ENCODE measurements at regions of chr2 and their contacts with region 1.

Region 1: GRCh38 chr2:207746131-207746530 is 23.6 kb downstream of the FZD5 start:
- DNase-seq: peak; percentile 85
- ATAC-seq: peak; percentile 79
- H3K4me3 ChIP-seq: no peak overlapping the region
- H3K27ac ChIP-seq: peak overlapping the region; percentile 2
- H3K4me1 ChIP-seq: peaks cover 64% of the 10 kb centered on the region
- H3K27me3 ChIP-seq: no peaks in the 10 kb centered on the region
- CTCF ChIP-seq: peak; percentile 97
- EP300 ChIP-seq: peak in 1 of 2 experiments; percentile 36; a peak in 1 of 4 replicates
- POLR2A ChIP-seq: no peak
- RAD21 ChIP-seq: peak; percentile 99

Region 2: DNA sequence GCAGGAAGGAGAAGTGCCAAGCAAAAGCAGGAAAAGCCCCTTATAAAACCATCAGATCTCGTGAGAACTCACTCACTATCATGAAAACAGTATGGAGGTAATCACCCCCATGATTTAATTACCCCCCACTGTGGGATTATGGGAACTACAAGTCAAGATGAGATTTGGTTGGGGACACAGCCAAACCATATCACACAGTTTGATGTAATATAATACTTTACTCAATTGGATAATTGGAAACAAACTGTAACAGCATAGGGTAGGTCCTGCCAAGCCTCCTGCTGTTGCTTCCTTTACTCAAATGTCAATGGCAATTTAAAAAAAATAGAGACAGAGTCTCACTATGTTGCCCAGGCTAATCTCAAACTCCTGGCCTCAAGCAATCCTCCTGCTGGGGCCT is 105.5 kb before region 1 on chr2:
- CTCF ChIA-PET with region 1: no interaction called
- POLR2A ChIA-PET with region 1: no interaction called
- in situ Hi-C with region 1: no loop called
- intact Hi-C with region 1: no loop called
- DNase-seq: no peak
- ATAC-seq: no peak
- H3K4me3 ChIP-seq: no peak overlapping the region
- H3K27ac ChIP-seq: no peak overlapping the region
- H3K4me1 ChIP-seq: no peaks in the 10 kb centered on the region
- H3K27me3 ChIP-seq: peaks cover 0 to 3% of the 10 kb centered on the region in 2 experiments; a peak in 1 of 5 replicates
- CTCF ChIP-seq: no peak
- EP300 ChIP-seq: no peak
- POLR2A ChIP-seq: no peak
- RAD21 ChIP-seq: no peak

Region 3: GRCh38 chr2:207722773-207723424 is 23.2 kb before region 1 on chr2:
- CTCF ChIA-PET with region 1: no interaction called
- POLR2A ChIA-PET with region 1: no interaction called
- in situ Hi-C with region 1: no loop called
- intact Hi-C with region 1: no loop called
- DNase-seq: no peak
- ATAC-seq: no peak
- H3K4me3 ChIP-seq: no peak overlapping the region
- H3K27ac ChIP-seq: no peak overlapping the region
- H3K4me1 ChIP-seq: peaks cover 37% of the 10 kb centered on the region
- H3K27me3 ChIP-seq: no peaks in the 10 kb centered on the region
- CTCF ChIP-seq: no peak
- EP300 ChIP-seq: no peak
- POLR2A ChIP-seq: no peak
- RAD21 ChIP-seq: no peak

Region 4: DNA sequence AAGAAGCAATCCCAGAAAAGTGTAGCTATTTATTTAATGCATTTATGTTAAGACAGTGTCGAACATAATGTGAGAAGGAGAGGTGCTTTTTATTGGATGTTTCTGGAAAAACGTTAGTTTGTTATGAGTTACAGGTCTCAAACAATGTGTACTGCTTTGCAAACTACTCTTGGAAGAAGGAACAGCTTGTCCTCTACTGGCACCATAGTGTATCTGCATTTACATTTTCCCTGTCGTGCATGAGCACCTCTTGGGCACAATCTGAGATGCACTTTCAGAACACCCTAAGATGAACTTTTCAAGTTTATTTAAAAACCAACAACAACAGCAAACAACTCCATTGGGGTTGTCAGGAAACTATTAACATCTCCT is 11.9 kb before region 1 on chr2:
- CTCF ChIA-PET with region 1: interaction called, 4 read pairs
- POLR2A ChIA-PET with region 1: interaction called, 17 read pairs
- in situ Hi-C with region 1: no loop called
- intact Hi-C with region 1: no loop called
- DNase-seq: peak; percentile 75
- ATAC-seq: peak; percentile 94
- H3K4me3 ChIP-seq: peak overlapping the region; percentile 29 to 50 (median 40); a peak in 4 of 6 replicates
- H3K27ac ChIP-seq: peak overlapping the region; percentile 89
- H3K4me1 ChIP-seq: peaks cover 34% of the 10 kb centered on the region
- H3K27me3 ChIP-seq: no peaks in the 10 kb centered on the region
- CTCF ChIP-seq: peak; percentile 92
- EP300 ChIP-seq: no peak
- POLR2A ChIP-seq: no peak
- RAD21 ChIP-seq: peak; percentile 89

Region 5: GRCh38 chr2:207819839-207820784 is 74.0 kb after region 1 on chr2:
- CTCF ChIA-PET with region 1: no interaction called
- POLR2A ChIA-PET with region 1: interaction called, 18 read pairs
- in situ Hi-C with region 1: no loop called
- intact Hi-C with region 1: no loop called
- DNase-seq: peak; percentile 97
- ATAC-seq: peak; percentile 89
- H3K4me3 ChIP-seq: peak overlapping the region; percentile 41 to 55 (median 53)
- H3K27ac ChIP-seq: peak overlapping the region; percentile 94
- H3K4me1 ChIP-seq: peaks cover 100% of the 10 kb centered on the region
- H3K27me3 ChIP-seq: no peaks in the 10 kb centered on the region
- CTCF ChIP-seq: no peak; the same call in 1 of the 2 replicates
- EP300 ChIP-seq: peak in 1 of 2 experiments; percentile 83; a peak in 3 of 4 replicates
- POLR2A ChIP-seq: peak; percentile 68 to 81
- RAD21 ChIP-seq: peak; percentile 40; the same call in 1 of the 2 replicates

Region 6: GRCh38 chr2:207896525-207897295 is 150.6 kb after region 1 on chr2:
- CTCF ChIA-PET with region 1: no interaction called
- POLR2A ChIA-PET with region 1: interaction called, 15 read pairs
- in situ Hi-C with region 1: no loop called
- intact Hi-C with region 1: no loop called
- DNase-seq: peak; percentile 46
- ATAC-seq: peak; percentile 81
- H3K4me3 ChIP-seq: no peak overlapping the region; a peak in 1 of 6 replicates
- H3K27ac ChIP-seq: peak overlapping the region; percentile 88
- H3K4me1 ChIP-seq: peaks cover 81% of the 10 kb centered on the region
- H3K27me3 ChIP-seq: no peaks in the 10 kb centered on the region
- CTCF ChIP-seq: peak; percentile 30; the same call in 1 of the 2 replicates
- EP300 ChIP-seq: no peak
- POLR2A ChIP-seq: no peak
- RAD21 ChIP-seq: no peak

Region 7: DNA sequence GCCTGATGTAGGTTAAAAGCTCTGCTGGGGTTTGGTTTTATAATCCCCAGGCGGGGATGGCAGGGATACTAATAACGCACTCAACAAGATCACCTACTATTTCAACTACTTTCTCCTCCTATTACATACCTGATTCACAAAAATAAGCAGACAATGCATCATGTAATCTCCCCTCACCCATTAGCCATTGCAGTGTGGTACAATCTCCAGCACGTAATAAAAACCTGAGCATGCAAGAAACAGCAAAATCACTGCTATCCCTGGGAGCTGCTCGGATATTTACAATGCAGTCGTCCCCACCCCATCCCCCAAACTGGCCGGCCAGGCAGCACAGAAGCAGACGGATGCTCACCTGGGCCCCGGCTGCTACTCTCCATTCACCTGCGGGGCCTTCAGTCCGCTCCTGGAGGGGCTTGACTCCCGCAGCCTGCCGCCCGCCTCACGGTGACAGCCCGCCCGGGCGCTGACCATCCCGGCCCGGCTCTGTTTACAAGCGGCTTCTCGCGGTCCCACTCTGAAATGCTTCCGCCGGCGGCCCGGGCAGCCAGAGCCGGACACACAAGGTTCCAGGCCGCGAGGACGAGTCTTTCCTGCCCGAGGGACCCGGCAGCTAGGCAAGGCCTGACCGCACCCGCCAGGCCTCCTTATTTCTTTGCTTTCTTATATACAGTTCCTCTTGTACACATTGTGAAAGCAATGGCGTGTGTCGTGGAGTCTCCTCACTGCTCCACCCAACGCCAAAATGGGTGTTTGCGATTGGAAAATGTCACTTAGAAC is 279.1 kb after region 1 on chr2 and contains the start of gene PLEKHM3:
- CTCF ChIA-PET with region 1: no interaction called
- POLR2A ChIA-PET with region 1: interaction called, 16 read pairs
- in situ Hi-C with region 1: no loop called
- intact Hi-C with region 1: no loop called
- DNase-seq: peak; percentile 75
- ATAC-seq: peak; percentile 98
- H3K4me3 ChIP-seq: peak within 1 kb of the TSS; percentile 86 to 93 (median 87)
- H3K27ac ChIP-seq: peak within 1 kb of the TSS; percentile 72
- H3K4me1 ChIP-seq: peaks cover 21% of the 10 kb centered on the region
- H3K27me3 ChIP-seq: no peaks in the 10 kb centered on the region; a peak in 1 of 5 replicates
- CTCF ChIP-seq: peak; percentile 45
- EP300 ChIP-seq: peak; percentile 50 to 66; a peak in 3 of 4 replicates
- POLR2A ChIP-seq: peak; percentile 80 to 90
- RAD21 ChIP-seq: peak; percentile 77
- total RNA-seq, gene PLEKHM3: 4.5 and 5.3 TPM in 2 replicates

Region 8: GRCh38 chr2:208072250-208072892 is 326.2 kb after region 1 on chr2:
- CTCF ChIA-PET with region 1: interaction called, 39 read pairs
- POLR2A ChIA-PET with region 1: interaction called, 3 read pairs
- in situ Hi-C with region 1: no loop called
- intact Hi-C with region 1: loop called (anchors 1 kb)
- DNase-seq: peak; percentile 63
- ATAC-seq: peak; percentile 93
- H3K4me3 ChIP-seq: no peak overlapping the region
- H3K27ac ChIP-seq: no peak overlapping the region
- H3K4me1 ChIP-seq: no peaks in the 10 kb centered on the region
- H3K27me3 ChIP-seq: peaks cover 0 to 22% of the 10 kb centered on the region in 2 experiments; a peak in 3 of 5 replicates
- CTCF ChIP-seq: peak; percentile 94
- EP300 ChIP-seq: no peak
- POLR2A ChIP-seq: no peak
- RAD21 ChIP-seq: peak; percentile 88

Measured in HepG2 (cell line).